ENCODE measurements at regions of chr1 and their contacts with region 1.

Region 1: GRCh38 chr1:155261852-155262673 is at the start of gene SCAMP3:
- DNase-seq: peak; percentile 62 to 95 (median 79)
- ATAC-seq: peak; percentile 93
- H3K4me3 ChIP-seq: peak within 1 kb of the TSS; percentile 100
- H3K4me3 Mint-ChIP-seq: peak within 1 kb of the TSS; percentile 95
- H3K27ac ChIP-seq: peak within 1 kb of the TSS; percentile 71 to 72
- H3K27ac Mint-ChIP-seq: peak within 1 kb of the TSS; percentile 82
- H3K4me1 ChIP-seq: peaks cover 28% of the 10 kb centered on the region
- H3K4me1 Mint-ChIP-seq: peaks cover 40% of the 10 kb centered on the region
- H3K27me3 ChIP-seq: no peaks in the 10 kb centered on the region
- H3K27me3 Mint-ChIP-seq: no peaks in the 10 kb centered on the region
- CTCF ChIP-seq: no peak
- total RNA-seq, gene SCAMP3: 54.8 to 55.6 TPM

Region 2: GRCh38 chr1:155244368-155245162 is 17.5 kb before region 1 on chr1:
- CTCF ChIA-PET with region 1: interaction called, 47 read pairs
- POLR2A ChIA-PET with region 1: interaction called, 19 read pairs
- intact Hi-C with region 1: no loop called
- DNase-seq: peak; percentile 83 to 98 (median 91)
- ATAC-seq: peak; percentile 92
- H3K4me3 ChIP-seq: peak overlapping the region; percentile 68
- H3K4me3 Mint-ChIP-seq: peak overlapping the region; percentile 90
- H3K27ac ChIP-seq: peak overlapping the region; percentile 61 to 66
- H3K27ac Mint-ChIP-seq: peak overlapping the region; percentile 96
- H3K4me1 ChIP-seq: peaks cover 46% of the 10 kb centered on the region
- H3K4me1 Mint-ChIP-seq: peaks cover 47% of the 10 kb centered on the region
- H3K27me3 ChIP-seq: no peaks in the 10 kb centered on the region
- H3K27me3 Mint-ChIP-seq: peaks cover 5% of the 10 kb centered on the region
- CTCF ChIP-seq: peak; percentile 56

Region 3: GRCh38 chr1:155308493-155309422 is 46.7 kb after region 1 on chr1 and contains the start of gene FDPS:
- CTCF ChIA-PET with region 1: interaction called, 3 read pairs
- POLR2A ChIA-PET with region 1: interaction called, 6 read pairs
- intact Hi-C with region 1: loop called in 1 of 2 experiments (anchors 1 kb)
- DNase-seq: peak; percentile 90 to 100 (median 94)
- ATAC-seq: peak; percentile 97
- H3K4me3 ChIP-seq: peak within 1 kb of the TSS; percentile 93
- H3K4me3 Mint-ChIP-seq: peak within 1 kb of the TSS; percentile 94
- H3K27ac ChIP-seq: peak within 1 kb of the TSS; percentile 92 to 95
- H3K27ac Mint-ChIP-seq: peak within 1 kb of the TSS; percentile 96
- H3K4me1 ChIP-seq: peaks cover 29% of the 10 kb centered on the region
- H3K4me1 Mint-ChIP-seq: peaks cover 28% of the 10 kb centered on the region
- H3K27me3 ChIP-seq: no peaks in the 10 kb centered on the region
- H3K27me3 Mint-ChIP-seq: no peaks in the 10 kb centered on the region
- CTCF ChIP-seq: no peak
- total RNA-seq, gene FDPS: 44.0 to 47.3 TPM

Region 4: GRCh38 chr1:155323798-155324610 is 61.9 kb after region 1 on chr1:
- CTCF ChIA-PET with region 1: interaction called, 6 read pairs
- POLR2A ChIA-PET with region 1: interaction called, 19 read pairs
- intact Hi-C with region 1: no loop called
- DNase-seq: peak; percentile 69 to 94 (median 80)
- ATAC-seq: peak; percentile 79
- H3K4me3 ChIP-seq: peak overlapping the region; percentile 100
- H3K4me3 Mint-ChIP-seq: peak overlapping the region; percentile 92
- H3K27ac ChIP-seq: peak overlapping the region; percentile 93 to 97
- H3K27ac Mint-ChIP-seq: peak overlapping the region; percentile 69
- H3K4me1 ChIP-seq: peaks cover 49% of the 10 kb centered on the region
- H3K4me1 Mint-ChIP-seq: peaks cover 46% of the 10 kb centered on the region
- H3K27me3 ChIP-seq: no peaks in the 10 kb centered on the region
- H3K27me3 Mint-ChIP-seq: no peaks in the 10 kb centered on the region
- CTCF ChIP-seq: no peak